ENCODE measurements at regions of chrX and their contacts with region 1.

Region 1: GRCh38 chrX:43969504-43970501 is 3.4 kb downstream of the NDP start:
- DNase-seq: no peak
- H3K4me3 ChIP-seq: no peak overlapping the region
- H3K27ac ChIP-seq: no peak overlapping the region
- H3K4me1 ChIP-seq: no peaks in the 10 kb centered on the region
- H3K27me3 ChIP-seq: no peaks in the 10 kb centered on the region
- CTCF ChIP-seq: no peak

Region 2: DNA sequence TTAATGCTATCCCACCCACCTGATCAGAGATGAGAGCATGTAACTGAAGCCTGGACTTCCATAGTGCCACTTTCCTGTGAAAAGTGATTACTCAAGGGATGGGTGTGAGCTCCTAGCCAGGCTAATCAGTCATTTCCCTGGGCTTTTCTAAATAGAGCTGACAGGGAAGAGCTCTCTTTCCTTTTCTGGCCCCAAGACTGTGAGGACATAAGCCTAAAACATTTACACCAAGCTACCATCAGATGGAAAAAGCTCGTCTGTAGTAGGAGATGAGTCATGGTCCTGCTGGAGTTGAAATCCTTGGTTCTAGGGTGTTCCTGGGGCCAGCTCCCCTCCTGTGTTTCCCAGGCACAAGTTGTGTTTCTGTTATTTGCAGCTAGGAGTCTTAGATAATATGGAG is 55.8 kb after region 1 on chrX:
- intact Hi-C with region 1: loop called (anchors 10 kb)
- DNase-seq: no peak
- H3K4me3 ChIP-seq: no peak overlapping the region
- H3K27ac ChIP-seq: no peak overlapping the region
- H3K4me1 ChIP-seq: no peaks in the 10 kb centered on the region
- H3K27me3 ChIP-seq: no peaks in the 10 kb centered on the region
- CTCF ChIP-seq: no peak